H1 (cell line): ENCODE measurements at regions of chr9 and their contacts with region 1.

Region 1: DNA sequence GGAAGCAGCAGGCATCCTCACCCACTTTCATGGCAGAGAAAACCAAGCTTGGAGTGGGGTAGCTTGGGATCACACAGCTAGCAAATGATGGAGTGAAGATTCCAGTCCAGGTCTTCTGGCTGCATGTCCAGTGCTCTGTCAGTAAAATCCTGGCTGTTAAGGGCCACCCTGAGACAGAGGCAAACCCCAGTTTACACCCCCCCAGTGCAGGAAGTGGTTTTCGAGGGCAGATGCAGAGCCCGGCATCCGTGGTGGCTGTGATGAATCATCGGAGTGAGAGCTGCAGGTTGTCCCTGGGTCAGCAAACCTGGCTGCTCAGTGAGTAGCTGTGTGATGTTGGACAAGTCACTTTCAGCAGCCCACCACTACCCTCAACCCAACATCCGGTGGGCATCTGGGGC is 115.4 kb downstream of the RGS3 start:
- DNase-seq: no peak
- H3K4me3 ChIP-seq: no peak overlapping the region
- H3K27ac ChIP-seq: no peak overlapping the region
- H3K4me1 ChIP-seq: peaks cover 0 to 14% (median 7%) of the 10 kb centered on the region in 4 experiments; a peak in 6 of 7 replicates
- H3K27me3 ChIP-seq: no peaks in the 10 kb centered on the region
- CTCF ChIP-seq: no peak
- EP300 ChIP-seq: no peak
- POLR2A ChIP-seq: no peak
- RAD21 ChIP-seq: no peak

Region 2: GRCh38 chr9:113446323-113446740 is 132.6 kb before region 1 on chr9:
- CTCF ChIA-PET with region 1: interaction called, 37 read pairs
- POLR2A ChIA-PET with region 1: interaction called, 4 read pairs
- DNase-seq: no peak
- H3K4me3 ChIP-seq: no peak overlapping the region
- H3K27ac ChIP-seq: no peak overlapping the region
- H3K4me1 ChIP-seq: no peaks in the 10 kb centered on the region
- H3K27me3 ChIP-seq: no peaks in the 10 kb centered on the region
- CTCF ChIP-seq: peak in 2 of 3 experiments; percentile 47; a peak in 2 of 4 replicates
- EP300 ChIP-seq: no peak
- POLR2A ChIP-seq: no peak
- RAD21 ChIP-seq: peak; percentile 86 to 88

Region 3: DNA sequence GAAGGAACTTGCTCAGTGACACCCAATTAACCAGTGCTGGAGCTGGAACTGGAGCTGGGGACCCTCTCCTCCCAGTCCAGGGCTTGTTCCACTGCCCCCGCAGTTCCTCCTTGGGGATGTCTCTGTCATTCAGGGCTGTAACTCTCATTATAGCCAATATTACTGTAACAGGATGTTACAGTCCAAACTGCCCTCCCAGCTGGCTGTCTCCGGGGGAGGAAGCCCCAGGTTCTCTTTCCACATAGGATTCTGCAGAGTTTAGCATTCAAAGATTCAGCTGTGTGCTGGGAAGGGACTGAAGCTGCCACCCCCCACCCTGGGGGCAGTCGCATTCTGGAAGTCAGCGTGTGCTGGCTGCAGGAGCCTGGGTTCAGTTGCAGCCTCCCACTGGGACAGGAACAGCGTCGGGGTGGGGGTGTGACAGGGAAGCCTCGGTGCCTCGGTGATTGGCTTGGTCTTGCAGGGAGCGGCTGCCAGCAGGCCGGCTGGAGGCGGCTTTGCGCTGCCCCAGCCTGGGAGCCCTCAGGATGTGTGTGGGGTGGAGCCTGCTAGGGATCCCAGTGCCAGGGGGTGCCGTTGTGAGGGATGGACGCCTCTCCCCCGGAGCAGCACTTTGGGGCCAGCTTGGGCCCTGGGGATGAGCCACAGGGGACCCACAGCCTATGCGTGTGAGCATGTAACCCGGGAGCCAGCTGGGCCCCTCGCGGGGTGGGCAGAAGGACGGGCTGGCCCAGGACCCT is 14.2 kb before region 1 on chr9:
- CTCF ChIA-PET with region 1: interaction called, 15 read pairs
- POLR2A ChIA-PET with region 1: interaction called, 17 read pairs
- DNase-seq: peak in 1 of 2 experiments; percentile 68
- H3K4me3 ChIP-seq: peak overlapping the region; percentile 37 to 61 (median 48)
- H3K27ac ChIP-seq: no peak overlapping the region
- H3K4me1 ChIP-seq: peaks cover 4 to 23% (median 13%) of the 10 kb centered on the region in 4 experiments
- H3K27me3 ChIP-seq: peaks cover 0 to 5% (median 0%) of the 10 kb centered on the region in 4 experiments; a peak in 1 of 7 replicates
- CTCF ChIP-seq: no peak
- EP300 ChIP-seq: no peak
- POLR2A ChIP-seq: no peak
- RAD21 ChIP-seq: no peak